ENCODE measurements at regions of chr19 and their contacts with region 1.

Region 1: DNA sequence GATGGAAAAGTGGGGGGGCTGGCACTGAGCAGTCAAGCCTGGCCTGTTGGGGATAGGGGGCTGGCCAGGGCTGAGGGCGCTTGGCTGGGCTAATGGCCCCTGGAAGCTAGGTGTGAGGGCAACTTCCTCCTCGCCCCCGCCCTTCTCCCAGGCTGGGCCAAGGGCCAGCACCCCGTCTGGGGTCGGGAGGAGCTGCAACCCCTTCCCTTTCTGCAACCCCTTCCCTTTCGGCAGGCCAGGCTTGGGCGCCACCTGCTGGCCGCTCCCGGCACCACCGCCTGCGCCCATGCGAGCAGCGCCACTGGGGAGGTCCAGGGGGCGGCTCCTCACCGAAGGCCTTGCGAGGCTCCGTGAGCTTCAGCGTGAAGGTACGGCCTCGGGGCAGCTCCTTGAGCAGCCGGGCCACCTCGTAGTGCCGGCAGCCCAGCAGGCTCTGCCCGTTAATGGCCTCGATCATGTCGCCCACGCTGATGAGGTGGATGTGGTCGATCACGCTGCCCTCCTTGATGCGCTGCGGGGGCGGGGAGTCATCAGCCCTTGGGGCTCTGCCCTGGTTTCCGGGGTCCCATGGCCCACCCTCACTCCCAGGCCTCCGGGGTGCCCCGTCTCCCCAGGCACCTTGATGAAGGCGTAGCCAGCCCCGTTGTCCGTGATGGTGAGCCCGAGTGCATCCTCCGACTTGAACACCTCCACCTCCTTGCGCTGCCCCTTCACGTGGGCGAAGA is 5.0 kb upstream of the PTGER1 start:
- DNase-seq: peak; percentile 74
- ATAC-seq: peak; percentile 76
- H3K4me3 ChIP-seq: no peak overlapping the region
- H3K4me3 Mint-ChIP-seq: no peak overlapping the region
- H3K27ac ChIP-seq: no peak overlapping the region
- H3K27ac Mint-ChIP-seq: no peak overlapping the region
- H3K4me1 ChIP-seq: peaks cover 8 to 12% of the 10 kb centered on the region in 2 donors
- H3K4me1 Mint-ChIP-seq: peaks cover 8% of the 10 kb centered on the region
- H3K27me3 ChIP-seq: peaks cover 0 to 10% (median 3%) of the 10 kb centered on the region in 4 experiments
- H3K27me3 Mint-ChIP-seq: peaks cover 13% of the 10 kb centered on the region
- CTCF ChIP-seq: peak; percentile 93

Region 2: DNA sequence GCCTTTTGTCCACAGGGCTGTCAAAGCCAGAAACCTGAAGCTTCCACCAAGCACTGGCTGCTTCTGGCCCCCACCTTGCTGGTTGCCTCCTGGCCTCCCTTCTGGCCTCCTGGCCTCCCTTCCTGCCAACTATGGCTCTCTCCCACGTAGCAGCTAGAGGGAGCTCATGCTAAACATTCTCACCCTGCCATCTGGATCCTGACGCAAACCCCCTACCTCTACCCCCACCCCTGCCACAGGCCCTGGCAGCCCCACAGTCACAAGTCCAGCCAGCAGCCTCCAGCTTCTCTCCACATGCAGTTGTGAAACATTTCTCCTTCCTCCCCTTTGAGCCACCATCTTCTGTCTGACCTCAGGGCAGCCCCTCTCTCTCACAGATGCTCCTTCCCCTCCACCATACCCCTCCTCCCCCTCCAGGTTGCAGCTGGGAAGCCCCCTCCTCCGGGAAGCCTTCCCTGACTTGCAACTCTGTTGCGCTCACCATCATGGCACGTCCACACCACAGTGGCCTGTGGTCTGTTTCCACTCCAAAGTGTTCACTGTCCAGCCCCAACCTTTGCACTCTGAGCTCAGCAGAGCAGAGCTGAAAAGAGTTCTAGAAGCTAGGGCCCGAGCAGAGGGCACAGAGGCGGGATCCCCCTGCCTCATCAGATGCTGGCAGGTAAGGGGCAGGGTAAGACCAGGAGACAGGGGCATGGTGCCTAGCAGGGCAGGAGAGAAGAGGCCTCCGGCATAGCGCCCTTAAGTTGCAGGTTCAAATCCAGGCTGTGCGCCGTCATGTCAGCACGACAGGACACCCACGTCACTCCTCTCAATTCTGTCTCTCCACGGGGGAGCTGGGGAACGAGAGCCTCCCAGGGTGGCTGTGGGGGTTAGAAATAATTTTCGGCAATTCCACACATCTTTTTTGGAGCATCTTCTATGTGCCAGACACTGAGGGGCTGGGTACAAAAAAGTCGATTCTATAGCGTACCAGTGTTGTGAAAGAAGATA is 281.5 kb before region 1 on chr19:
- CTCF ChIA-PET with region 1: interaction called, 13 read pairs
- POLR2A ChIA-PET with region 1: no interaction called
- intact Hi-C with region 1: no loop called
- DNase-seq: no peak
- ATAC-seq: no peak
- H3K4me3 ChIP-seq: no peak overlapping the region
- H3K4me3 Mint-ChIP-seq: no peak overlapping the region
- H3K27ac ChIP-seq: no peak overlapping the region
- H3K27ac Mint-ChIP-seq: no peak overlapping the region
- H3K4me1 ChIP-seq: peaks cover 0 to 3% of the 10 kb centered on the region in 2 donors
- H3K4me1 Mint-ChIP-seq: peaks cover 8% of the 10 kb centered on the region
- H3K27me3 ChIP-seq: peaks cover 0 to 6% (median 0%) of the 10 kb centered on the region in 4 experiments
- H3K27me3 Mint-ChIP-seq: peaks cover 17% of the 10 kb centered on the region
- CTCF ChIP-seq: no peak

Region 3: GRCh38 chr19:14496028-14496833 is 16.1 kb after region 1 on chr19 and contains the start of gene GIPC1:
- CTCF ChIA-PET with region 1: interaction called, 4 read pairs
- POLR2A ChIA-PET with region 1: interaction called, 16 read pairs
- intact Hi-C with region 1: no loop called
- DNase-seq: peak; percentile 89
- ATAC-seq: peak; percentile 90
- H3K4me3 ChIP-seq: peak within 1 kb of the TSS in 4 of 5 experiments; percentile 62 to 69 (median 62)
- H3K4me3 Mint-ChIP-seq: peak within 1 kb of the TSS; percentile 86
- H3K27ac ChIP-seq: peak within 1 kb of the TSS in 1 of 2 donors; percentile 24
- H3K27ac Mint-ChIP-seq: peak within 1 kb of the TSS; percentile 78
- H3K4me1 ChIP-seq: peaks cover 6 to 16% of the 10 kb centered on the region in 2 donors
- H3K4me1 Mint-ChIP-seq: peaks cover 14% of the 10 kb centered on the region
- H3K27me3 ChIP-seq: no peaks in the 10 kb centered on the region
- H3K27me3 Mint-ChIP-seq: no peaks in the 10 kb centered on the region
- CTCF ChIP-seq: no peak
- total RNA-seq, gene GIPC1: 10.7 and 12.0 TPM in 2 replicates

Region 4: GRCh38 chr19:14556662-14557188 is 76.6 kb after region 1 on chr19:
- CTCF ChIA-PET with region 1: no interaction called
- POLR2A ChIA-PET with region 1: no interaction called
- intact Hi-C with region 1: no loop called
- DNase-seq: peak; percentile 80
- ATAC-seq: peak; percentile 82
- H3K4me3 ChIP-seq: no peak overlapping the region
- H3K4me3 Mint-ChIP-seq: peak overlapping the region; percentile 41
- H3K27ac ChIP-seq: no peak overlapping the region
- H3K27ac Mint-ChIP-seq: no peak overlapping the region
- H3K4me1 ChIP-seq: peaks cover 4 to 19% of the 10 kb centered on the region in 2 donors
- H3K4me1 Mint-ChIP-seq: peaks cover 30% of the 10 kb centered on the region
- H3K27me3 ChIP-seq: no peaks in the 10 kb centered on the region
- H3K27me3 Mint-ChIP-seq: no peaks in the 10 kb centered on the region
- CTCF ChIP-seq: peak; percentile 92